ENCODE measurements at regions of chr5 and their contacts with region 1.

Region 1: GRCh38 chr5:151126199-151126645 is 31.4 kb downstream of the ANXA6 start:
- DNase-seq: peak; percentile 72 to 74
- ATAC-seq: peak; percentile 84 to 93; a peak in 5 of 6 replicates
- H3K4me3 ChIP-seq: no peak overlapping the region
- H3K27ac ChIP-seq: no peak overlapping the region
- H3K4me1 ChIP-seq: peaks cover 7% of the 10 kb centered on the region; the same call in 2 of the 3 replicates
- CTCF ChIP-seq: peak; percentile 85
- EP300 ChIP-seq: no peak
- POLR2A ChIP-seq: no peak
- RAD21 ChIP-seq: peak; percentile 74 to 78

Region 2: DNA sequence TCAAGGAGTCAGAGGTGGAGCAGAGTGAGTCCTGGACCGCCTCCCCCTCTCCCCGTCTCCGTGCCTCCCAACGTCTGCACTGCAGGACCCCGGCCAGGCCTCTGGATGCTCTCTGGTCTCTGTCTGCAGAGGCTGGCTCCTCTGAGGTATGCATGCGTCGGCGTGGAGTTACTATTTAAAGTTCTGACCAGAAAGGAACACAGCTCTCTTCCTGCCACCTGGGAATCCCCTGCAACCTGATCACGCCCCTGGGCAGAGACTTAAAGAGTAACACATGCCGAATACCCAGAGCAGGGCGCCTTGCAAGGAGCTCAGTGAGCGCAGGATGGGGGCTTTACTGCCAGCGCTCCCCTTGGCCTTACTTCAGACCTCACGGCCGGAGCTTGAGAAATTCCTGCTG is 15.3 kb after region 1 on chr5:
- CTCF ChIA-PET with region 1: interaction called, 39 read pairs
- POLR2A ChIA-PET with region 1: no interaction called
- DNase-seq: no peak
- ATAC-seq: no peak
- H3K4me3 ChIP-seq: no peak overlapping the region
- H3K27ac ChIP-seq: no peak overlapping the region
- H3K4me1 ChIP-seq: no peaks in the 10 kb centered on the region
- CTCF ChIP-seq: no peak
- EP300 ChIP-seq: no peak
- POLR2A ChIP-seq: no peak
- RAD21 ChIP-seq: no peak

Region 3: GRCh38 chr5:151150471-151151262 is 24.4 kb after region 1 on chr5:
- CTCF ChIA-PET with region 1: interaction called, 16 read pairs
- POLR2A ChIA-PET with region 1: no interaction called
- DNase-seq: no peak
- ATAC-seq: peak in 1 of 2 experiments; percentile 42; a peak in 3 of 6 replicates
- H3K4me3 ChIP-seq: no peak overlapping the region
- H3K27ac ChIP-seq: peak overlapping the region in 1 of 2 experiments; percentile 16; a peak in 3 of 6 replicates
- H3K4me1 ChIP-seq: no peaks in the 10 kb centered on the region
- CTCF ChIP-seq: no peak
- EP300 ChIP-seq: no peak
- POLR2A ChIP-seq: no peak
- RAD21 ChIP-seq: no peak

Region 4: GRCh38 chr5:151157426-151158286 is 31.4 kb after region 1 on chr5 and contains the start of gene ANXA6:
- CTCF ChIA-PET with region 1: interaction called, 279 read pairs
- POLR2A ChIA-PET with region 1: no interaction called
- DNase-seq: peak; percentile 63 to 94
- ATAC-seq: peak; percentile 98 to 100
- H3K4me3 ChIP-seq: peak within 1 kb of the TSS; percentile 65
- H3K27ac ChIP-seq: peak within 1 kb of the TSS; percentile 83 to 92
- H3K4me1 ChIP-seq: peaks cover 17% of the 10 kb centered on the region
- CTCF ChIP-seq: no peak
- EP300 ChIP-seq: no peak
- POLR2A ChIP-seq: peak; percentile 67
- RAD21 ChIP-seq: no peak
- polyA plus RNA-seq, gene ANXA6: 32.4 and 34.9 TPM in 2 replicates

Region 5: GRCh38 chr5:151239237-151239861 is 113.1 kb after region 1 on chr5:
- CTCF ChIA-PET with region 1: interaction called, 102 read pairs
- POLR2A ChIA-PET with region 1: no interaction called
- DNase-seq: peak; percentile 60 to 67
- ATAC-seq: peak; percentile 79 to 91
- H3K4me3 ChIP-seq: no peak overlapping the region
- H3K27ac ChIP-seq: no peak overlapping the region
- H3K4me1 ChIP-seq: 0 out of 3 replicates have a peak, but pooled peaks cover 3% of the 10 kb centered on the region
- CTCF ChIP-seq: peak; percentile 61
- EP300 ChIP-seq: no peak
- POLR2A ChIP-seq: no peak
- RAD21 ChIP-seq: peak; percentile 74 to 77